B cell (primary cell): ENCODE measurements at regions of chr7 and their contacts with region 1.

Region 1: GRCh38 chr7:39580149-39580874 is 14.1 kb downstream of the YAE1 start:
- DNase-seq: peak; percentile 87
- ATAC-seq: peak; percentile 95
- H3K4me3 ChIP-seq: no peak overlapping the region
- H3K4me3 Mint-ChIP-seq: no peak overlapping the region
- H3K27ac ChIP-seq: no peak overlapping the region
- H3K27ac Mint-ChIP-seq: no peak overlapping the region
- H3K4me1 ChIP-seq: no peaks in the 10 kb centered on the region
- H3K4me1 Mint-ChIP-seq: no peaks in the 10 kb centered on the region
- H3K27me3 ChIP-seq: no peaks in the 10 kb centered on the region
- H3K27me3 Mint-ChIP-seq: no peaks in the 10 kb centered on the region
- CTCF ChIP-seq: peak; percentile 93

Region 2: GRCh38 chr7:39566023-39566921 is 14.0 kb before region 1 on chr7 and contains the start of gene YAE1:
- CTCF ChIA-PET with region 1: interaction called, 11 read pairs
- POLR2A ChIA-PET with region 1: no interaction called
- intact Hi-C with region 1: no loop called
- DNase-seq: peak; percentile 86
- ATAC-seq: peak; percentile 96
- H3K4me3 ChIP-seq: peak within 1 kb of the TSS; percentile 72 to 90 (median 89)
- H3K4me3 Mint-ChIP-seq: peak within 1 kb of the TSS; percentile 100
- H3K27ac ChIP-seq: peak within 1 kb of the TSS; percentile 65 to 79
- H3K27ac Mint-ChIP-seq: peak within 1 kb of the TSS; percentile 96
- H3K4me1 ChIP-seq: peaks cover 10 to 12% of the 10 kb centered on the region in 2 donors
- H3K4me1 Mint-ChIP-seq: peaks cover 21% of the 10 kb centered on the region
- H3K27me3 ChIP-seq: no peaks in the 10 kb centered on the region
- H3K27me3 Mint-ChIP-seq: peaks cover 1% of the 10 kb centered on the region
- CTCF ChIP-seq: no peak
- total RNA-seq, gene YAE1: 20.0 and 22.9 TPM in 2 replicates

Region 3: GRCh38 chr7:39609113-39609934 is 29.0 kb after region 1 on chr7:
- CTCF ChIA-PET with region 1: interaction called, 13 read pairs
- POLR2A ChIA-PET with region 1: no interaction called
- intact Hi-C with region 1: no loop called
- DNase-seq: peak; percentile 61
- ATAC-seq: peak; percentile 75
- H3K4me3 ChIP-seq: peak overlapping the region in 3 of 5 experiments; percentile 26 to 59 (median 38)
- H3K4me3 Mint-ChIP-seq: peak overlapping the region; percentile 81
- H3K27ac ChIP-seq: no peak overlapping the region
- H3K27ac Mint-ChIP-seq: peak overlapping the region; percentile 10
- H3K4me1 ChIP-seq: peaks cover 6 to 7% of the 10 kb centered on the region in 2 donors
- H3K4me1 Mint-ChIP-seq: peaks cover 17% of the 10 kb centered on the region
- H3K27me3 ChIP-seq: peaks cover 0 to 26% (median 11%) of the 10 kb centered on the region in 4 experiments
- H3K27me3 Mint-ChIP-seq: peaks cover 39% of the 10 kb centered on the region
- CTCF ChIP-seq: no peak

Region 4: GRCh38 chr7:39712751-39713150 is 132.4 kb after region 1 on chr7:
- CTCF ChIA-PET with region 1: no interaction called
- POLR2A ChIA-PET with region 1: no interaction called
- intact Hi-C with region 1: no loop called
- DNase-seq: no peak
- ATAC-seq: no peak
- H3K4me3 ChIP-seq: no peak overlapping the region
- H3K4me3 Mint-ChIP-seq: no peak overlapping the region
- H3K27ac ChIP-seq: no peak overlapping the region
- H3K27ac Mint-ChIP-seq: no peak overlapping the region
- H3K4me1 ChIP-seq: no peaks in the 10 kb centered on the region
- H3K4me1 Mint-ChIP-seq: no peaks in the 10 kb centered on the region
- H3K27me3 ChIP-seq: no peaks in the 10 kb centered on the region
- H3K27me3 Mint-ChIP-seq: no peaks in the 10 kb centered on the region
- CTCF ChIP-seq: no peak

Region 5: DNA sequence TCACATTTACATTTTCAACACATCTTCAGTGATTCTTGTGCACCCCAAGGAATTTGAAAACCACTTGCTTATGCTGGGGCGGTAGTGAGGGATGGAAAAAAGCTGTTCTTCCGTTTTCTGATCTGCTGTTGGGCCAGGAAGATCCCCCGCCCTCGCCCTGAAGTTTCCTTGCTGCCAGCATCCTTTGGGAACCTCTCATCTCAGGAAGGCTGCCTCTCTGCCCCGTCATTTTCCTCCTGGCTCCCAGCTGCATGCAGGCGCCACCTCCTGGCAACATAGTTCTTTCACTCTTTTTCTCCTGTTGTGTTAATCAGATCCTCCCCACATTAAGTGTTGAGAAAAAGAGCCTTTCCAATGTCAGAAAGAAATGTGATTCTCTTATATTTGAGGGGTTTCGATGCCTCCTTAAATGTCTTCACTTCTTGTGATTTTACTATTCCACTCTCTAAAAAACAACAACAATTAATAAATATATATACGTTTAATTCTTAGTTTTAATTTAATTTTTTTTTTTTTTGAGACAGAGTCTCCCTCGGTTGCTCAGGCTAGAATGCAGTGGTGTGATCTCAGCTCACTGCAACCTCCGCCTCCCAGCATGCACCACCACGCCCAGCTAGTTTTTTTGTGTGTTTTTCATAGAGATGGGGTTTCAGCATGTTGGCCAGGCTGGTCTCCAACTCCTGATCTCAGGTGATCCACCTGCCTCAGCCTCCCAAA is 165.9 kb after region 1 on chr7:
- CTCF ChIA-PET with region 1: interaction called, 579 read pairs
- POLR2A ChIA-PET with region 1: no interaction called
- intact Hi-C with region 1: loop called (anchors 1 kb)
- DNase-seq: peak; percentile 71
- ATAC-seq: peak; percentile 51
- H3K4me3 ChIP-seq: no peak overlapping the region
- H3K4me3 Mint-ChIP-seq: no peak overlapping the region
- H3K27ac ChIP-seq: no peak overlapping the region
- H3K27ac Mint-ChIP-seq: no peak overlapping the region
- H3K4me1 ChIP-seq: peaks cover 0 to 6% of the 10 kb centered on the region in 2 donors
- H3K4me1 Mint-ChIP-seq: peaks cover 15% of the 10 kb centered on the region
- H3K27me3 ChIP-seq: no peaks in the 10 kb centered on the region
- H3K27me3 Mint-ChIP-seq: no peaks in the 10 kb centered on the region
- CTCF ChIP-seq: peak; percentile 75